WTC11 (cell line): ENCODE measurements at regions of chrX and their contacts with region 1.

Region 1: GRCh38 chrX:100395781-100396180 is 14.3 kb downstream of the PCDH19 start:
- DNase-seq: no peak
- ATAC-seq: no peak
- H3K4me3 Mint-ChIP-seq: no peak overlapping the region
- H3K27ac Mint-ChIP-seq: no peak overlapping the region
- H3K4me1 Mint-ChIP-seq: peaks cover 10% of the 10 kb centered on the region
- H3K27me3 Mint-ChIP-seq: peaks cover 91% of the 10 kb centered on the region
- CTCF ChIP-seq: no peak

Region 2: DNA sequence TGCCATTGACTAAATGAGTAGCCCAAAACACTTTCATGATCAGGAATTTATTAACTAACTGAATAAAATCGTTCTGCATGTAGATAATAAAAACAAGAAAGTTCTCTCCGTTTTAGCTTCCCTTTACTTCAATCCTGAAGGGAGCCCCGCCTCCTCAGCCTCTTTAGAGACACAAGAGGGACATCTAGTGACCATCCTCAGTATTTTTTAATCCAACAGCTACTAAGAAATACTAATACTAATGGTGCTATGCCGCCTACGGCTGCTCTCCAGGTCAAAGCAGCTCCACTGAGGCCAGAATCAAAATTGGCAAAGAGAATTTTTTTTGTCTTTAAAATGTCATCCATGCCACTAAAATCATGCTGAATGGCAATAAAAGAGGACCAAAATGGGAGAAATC is 17.4 kb after region 1 on chrX:
- CTCF ChIA-PET with region 1: interaction called, 17 read pairs
- POLR2A ChIA-PET with region 1: no interaction called
- DNase-seq: no peak
- ATAC-seq: peak; percentile 11; the same call in 1 of the 2 replicates
- H3K4me3 Mint-ChIP-seq: peak overlapping the region; percentile 69
- H3K27ac Mint-ChIP-seq: no peak overlapping the region
- H3K4me1 Mint-ChIP-seq: peaks cover 41% of the 10 kb centered on the region
- H3K27me3 Mint-ChIP-seq: peaks cover 65% of the 10 kb centered on the region
- CTCF ChIP-seq: no peak